Heart left ventricle (tissue), 16 donors: ENCODE measurements at regions of chr15 and their contacts with region 1.

Region 1: DNA sequence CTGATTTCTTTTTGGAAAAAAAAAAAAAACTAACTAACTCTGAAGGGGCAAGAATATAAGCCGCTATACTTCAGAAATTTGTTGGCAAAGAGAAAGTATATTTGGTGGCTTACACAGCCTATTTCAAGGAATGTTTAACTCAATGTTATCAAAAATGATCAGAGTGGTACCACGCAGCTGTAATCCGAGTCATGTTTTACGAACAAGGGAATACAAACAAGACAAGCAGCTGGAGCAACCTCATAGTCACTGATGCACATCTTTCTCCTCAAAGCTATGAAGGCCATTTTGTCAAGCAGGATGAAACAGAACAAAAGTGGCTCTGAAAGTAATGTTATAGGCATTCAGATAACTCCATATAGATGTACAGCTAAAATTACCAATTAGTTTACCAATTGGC is 81.2 kb downstream of the SCAPER start:
- DNase-seq: no peak
- ATAC-seq: no peak
- H3K4me3 ChIP-seq: no peak overlapping the region
- H3K27ac ChIP-seq: no peak overlapping the region
- H3K4me1 ChIP-seq: no peaks in the 10 kb centered on the region
- H3K27me3 ChIP-seq: no peaks in the 10 kb centered on the region
- CTCF ChIP-seq: no peak
- POLR2A ChIP-seq: no peak

Region 2: DNA sequence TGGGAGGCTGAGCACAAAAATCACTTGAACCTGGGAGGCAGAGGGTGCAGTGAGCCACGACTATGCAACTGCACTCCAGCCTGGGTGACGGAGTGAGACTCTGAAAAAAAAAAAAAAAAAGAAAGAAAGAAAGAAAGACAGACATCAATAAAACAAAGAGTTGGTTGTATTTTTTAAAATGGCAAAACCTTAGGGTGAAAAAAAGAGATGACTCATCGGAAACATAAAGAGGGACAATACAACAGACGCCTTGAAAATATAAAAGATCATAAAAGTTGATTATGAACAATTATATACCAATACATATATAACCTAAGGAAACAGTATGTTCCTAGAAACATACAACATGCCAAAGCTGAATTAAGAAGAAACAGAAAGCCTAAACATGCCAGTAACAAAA is 11.5 kb before region 1 on chr15:
- intact Hi-C with region 1: loop called in 1 of 10 experiments (anchors 1 kb)
- DNase-seq: no peak
- ATAC-seq: no peak
- H3K4me3 ChIP-seq: no peak overlapping the region
- H3K27ac ChIP-seq: no peak overlapping the region
- H3K4me1 ChIP-seq: peaks cover 0 to 4% (median 0%) of the 10 kb centered on the region in 12 donors
- H3K27me3 ChIP-seq: no peaks in the 10 kb centered on the region
- CTCF ChIP-seq: no peak
- POLR2A ChIP-seq: no peak